ENCODE measurements at regions of chr16 and their contacts with region 1.

Region 1: DNA sequence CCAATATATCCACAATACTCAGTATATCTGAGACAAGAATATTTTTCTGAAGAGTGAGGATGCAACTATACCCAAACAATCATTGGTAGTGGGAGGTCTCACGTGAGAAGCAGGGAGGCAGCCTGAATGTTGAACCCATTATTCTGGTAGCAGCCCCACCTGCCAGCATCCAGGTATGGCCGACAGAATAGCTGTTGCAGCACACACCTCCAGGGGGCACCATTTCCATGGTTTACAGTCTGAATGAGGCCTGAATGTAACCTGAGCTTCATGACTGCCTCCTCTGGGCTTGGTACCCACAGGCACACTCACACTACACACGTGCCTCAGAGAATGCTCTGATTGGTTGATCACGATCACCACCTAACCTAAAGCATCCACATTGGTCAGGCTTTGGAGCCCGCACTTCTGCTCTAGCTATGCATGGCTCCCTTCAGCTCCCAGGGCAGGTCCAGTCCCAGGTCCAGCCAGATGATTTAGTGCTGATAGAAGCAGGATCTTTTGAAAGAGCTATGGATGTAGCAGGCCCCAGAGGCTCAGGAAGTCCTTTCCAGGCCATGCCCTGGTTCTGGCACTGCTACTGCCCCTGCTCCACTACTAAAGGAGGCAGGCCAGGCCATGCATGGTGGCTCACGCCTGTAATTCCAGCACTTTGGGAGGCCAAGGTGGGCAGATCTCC is 11.0 kb upstream of the CBFB start:
- DNase-seq: peak; percentile 79 to 90 (median 84)
- ATAC-seq: peak; percentile 87 to 96 (median 90)
- H3K4me3 ChIP-seq: no peak overlapping the region
- H3K27ac ChIP-seq: no peak overlapping the region
- H3K4me1 ChIP-seq: peaks cover 0 to 6% (median 4%) of the 10 kb centered on the region in 3 donors
- H3K27me3 ChIP-seq: no peaks in the 10 kb centered on the region
- CTCF ChIP-seq: peak; percentile 56 to 71 (median 64)

Region 2: GRCh38 chr16:67146523-67147357 is 128.8 kb after region 1 on chr16:
- intact Hi-C with region 1: no loop called
- DNase-seq: no peak
- ATAC-seq: no peak
- H3K4me3 ChIP-seq: no peak overlapping the region
- H3K27ac ChIP-seq: no peak overlapping the region
- H3K4me1 ChIP-seq: no peaks in the 10 kb centered on the region
- H3K27me3 ChIP-seq: no peaks in the 10 kb centered on the region
- CTCF ChIP-seq: no peak

Region 3: GRCh38 chr16:67159593-67160406 is 141.9 kb after region 1 on chr16 and contains the starts of genes FBXL8 and TRADD:
- intact Hi-C with region 1: loop called in 1 of 3 experiments (anchors 5 kb)
- DNase-seq: peak; percentile 73 to 92 (median 84)
- ATAC-seq: peak; percentile 82 to 85 (median 83)
- H3K4me3 ChIP-seq: peak within 1 kb of the TSS; percentile 53 to 97 (median 96)
- H3K27ac ChIP-seq: peak within 1 kb of the TSS; percentile 73 to 91 (median 84)
- H3K4me1 ChIP-seq: peaks cover 3 to 23% (median 5%) of the 10 kb centered on the region in 3 donors
- H3K27me3 ChIP-seq: no peaks in the 10 kb centered on the region
- CTCF ChIP-seq: no peak
- total RNA-seq, gene FBXL8: 12.9 to 31.7 (median 24.2) TPM
- total RNA-seq, gene TRADD: 9.4 to 17.4 (median 11.5) TPM

Region 4: GRCh38 chr16:67183627-67184328 is 165.8 kb after region 1 on chr16 and contains the start of gene MATCAP1:
- intact Hi-C with region 1: loop called in 1 of 3 experiments (anchors 10 kb)
- DNase-seq: peak; percentile 92 to 96 (median 94)
- ATAC-seq: peak; percentile 90 to 94 (median 90)
- H3K4me3 ChIP-seq: peak within 1 kb of the TSS; percentile 52 to 74 (median 64)
- H3K27ac ChIP-seq: peak within 1 kb of the TSS; percentile 91 to 98 (median 97)
- H3K4me1 ChIP-seq: peaks cover 4 to 15% (median 12%) of the 10 kb centered on the region in 3 donors
- H3K27me3 ChIP-seq: no peaks in the 10 kb centered on the region
- CTCF ChIP-seq: no peak
- total RNA-seq, gene MATCAP1: 4.8 to 22.3 (median 10.4) TPM